PC-3 (cell line): ENCODE measurements at regions of chr1 and their contacts with region 1.

Region 1: DNA sequence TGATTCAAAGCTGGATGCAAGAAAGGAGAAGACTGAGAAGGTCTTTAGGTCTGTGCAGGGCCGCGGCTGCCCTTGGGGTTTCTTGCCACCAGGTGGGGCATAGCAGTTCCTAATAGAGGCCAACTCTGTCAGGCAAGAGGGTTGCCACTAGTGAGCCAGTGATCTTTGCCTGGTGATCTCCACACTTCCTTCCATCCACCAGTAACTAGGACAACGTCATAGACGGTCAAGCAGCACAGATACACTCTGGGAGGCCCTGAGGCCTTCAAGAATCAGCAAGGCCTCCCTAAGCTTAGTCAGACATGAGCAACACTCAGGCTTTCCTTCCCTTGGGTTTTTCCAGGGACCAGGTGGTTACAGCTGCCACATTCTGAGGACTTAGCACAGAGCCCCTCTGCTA is 32.9 kb upstream of the ATP2B4 start:
- DNase-seq: peak; percentile 69
- ATAC-seq: peak; percentile 25
- H3K4me3 ChIP-seq: no peak overlapping the region
- H3K27ac ChIP-seq: no peak overlapping the region
- H3K4me1 ChIP-seq: peaks cover 36% of the 10 kb centered on the region
- H3K27me3 ChIP-seq: no peaks in the 10 kb centered on the region
- CTCF ChIP-seq: peak; percentile 62

Region 2: GRCh38 chr1:203558064-203558760 is 35.5 kb before region 1 on chr1:
- CTCF ChIA-PET with region 1: no interaction called
- POLR2A ChIA-PET with region 1: no interaction called
- intact Hi-C with region 1: loop called (anchors 2 kb)
- DNase-seq: peak; percentile 99
- ATAC-seq: peak; percentile 77
- H3K4me3 ChIP-seq: peak overlapping the region; percentile 27; the same call in 1 of the 2 replicates
- H3K27ac ChIP-seq: peak overlapping the region; percentile 97
- H3K4me1 ChIP-seq: peaks cover 49% of the 10 kb centered on the region
- H3K27me3 ChIP-seq: no peaks in the 10 kb centered on the region
- CTCF ChIP-seq: no peak

Region 3: DNA sequence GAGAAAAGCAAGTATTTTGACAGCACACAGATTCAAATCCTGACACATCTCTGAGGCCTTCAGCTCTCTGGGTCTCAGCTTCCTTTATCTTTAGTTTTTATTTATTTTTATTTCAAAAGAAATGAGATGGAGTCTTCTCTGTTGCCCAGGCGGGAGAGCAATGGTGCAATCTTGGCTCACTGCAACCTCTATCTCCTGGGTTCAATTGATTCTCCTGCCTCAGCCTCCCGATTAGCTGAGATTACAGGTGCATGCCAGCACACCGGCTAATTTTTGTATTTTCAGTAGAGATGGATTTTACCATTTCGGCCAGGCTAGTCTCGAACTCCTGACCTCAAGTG is 13.8 kb after region 1 on chr1:
- CTCF ChIA-PET with region 1: interaction called, 3 read pairs
- POLR2A ChIA-PET with region 1: no interaction called
- intact Hi-C with region 1: loop called (anchors 2 kb)
- DNase-seq: no peak
- ATAC-seq: no peak
- H3K4me3 ChIP-seq: no peak overlapping the region
- H3K27ac ChIP-seq: peak overlapping the region; percentile 61
- H3K4me1 ChIP-seq: peaks cover 19% of the 10 kb centered on the region
- H3K27me3 ChIP-seq: no peaks in the 10 kb centered on the region
- CTCF ChIP-seq: no peak

Region 4: DNA sequence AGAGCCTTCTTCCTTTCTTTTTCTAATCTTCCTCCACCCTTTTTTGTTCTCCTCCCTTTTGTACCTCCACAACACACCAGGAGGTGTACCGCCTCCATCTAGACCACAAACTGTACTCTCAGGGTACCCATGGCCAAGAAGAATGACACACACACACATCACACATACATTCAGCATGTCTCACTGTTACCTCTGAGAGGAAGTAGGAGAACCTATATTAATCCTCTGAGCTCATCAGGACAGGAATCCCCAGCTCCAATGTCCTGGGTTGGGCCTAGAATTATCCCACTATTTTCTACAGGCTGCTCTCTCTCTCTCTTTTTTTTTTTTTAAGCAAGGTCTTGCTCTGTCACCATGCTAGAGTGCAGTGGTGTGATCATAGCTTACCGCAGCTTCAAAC is 69.6 kb after region 1 on chr1:
- CTCF ChIA-PET with region 1: interaction called, 6 read pairs
- POLR2A ChIA-PET with region 1: interaction called, 10 read pairs
- intact Hi-C with region 1: no loop called
- DNase-seq: peak; percentile 99
- ATAC-seq: peak; percentile 98
- H3K4me3 ChIP-seq: peak overlapping the region; percentile 31; the same call in 1 of the 2 replicates
- H3K27ac ChIP-seq: peak overlapping the region; percentile 95
- H3K4me1 ChIP-seq: peaks cover 36% of the 10 kb centered on the region
- H3K27me3 ChIP-seq: no peaks in the 10 kb centered on the region
- CTCF ChIP-seq: 0 out of 2 replicates have a peak, but pooled peaks have one; percentile 29

Region 5: DNA sequence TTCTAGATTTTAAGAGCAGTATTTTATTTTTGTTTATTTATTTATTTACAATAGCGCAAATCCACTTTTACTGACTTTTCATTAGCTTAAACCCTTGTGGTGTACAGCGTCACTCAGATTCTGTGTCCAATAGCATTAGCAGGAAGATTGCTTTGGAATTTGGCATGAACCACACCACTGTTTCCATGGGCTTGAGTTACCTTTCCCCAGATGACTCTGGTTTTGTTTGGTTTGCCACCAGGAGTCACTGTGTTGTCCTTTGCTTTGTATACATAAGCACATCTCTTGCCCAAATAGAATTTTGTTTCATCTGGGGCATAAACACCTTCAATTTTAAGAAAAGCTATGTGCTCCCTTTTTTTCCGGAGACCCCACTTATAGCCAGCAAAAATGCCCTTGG is 241.8 kb after region 1 on chr1:
- CTCF ChIA-PET with region 1: no interaction called
- POLR2A ChIA-PET with region 1: no interaction called
- intact Hi-C with region 1: no loop called
- DNase-seq: no peak
- ATAC-seq: no peak
- H3K4me3 ChIP-seq: no peak overlapping the region
- H3K27ac ChIP-seq: no peak overlapping the region
- H3K4me1 ChIP-seq: no peaks in the 10 kb centered on the region
- H3K27me3 ChIP-seq: no peaks in the 10 kb centered on the region
- CTCF ChIP-seq: peak; percentile 47